CD4-positive, alpha-beta memory T cell (primary cell): ENCODE measurements at regions of chr11 and their contacts with region 1.

Region 1: DNA sequence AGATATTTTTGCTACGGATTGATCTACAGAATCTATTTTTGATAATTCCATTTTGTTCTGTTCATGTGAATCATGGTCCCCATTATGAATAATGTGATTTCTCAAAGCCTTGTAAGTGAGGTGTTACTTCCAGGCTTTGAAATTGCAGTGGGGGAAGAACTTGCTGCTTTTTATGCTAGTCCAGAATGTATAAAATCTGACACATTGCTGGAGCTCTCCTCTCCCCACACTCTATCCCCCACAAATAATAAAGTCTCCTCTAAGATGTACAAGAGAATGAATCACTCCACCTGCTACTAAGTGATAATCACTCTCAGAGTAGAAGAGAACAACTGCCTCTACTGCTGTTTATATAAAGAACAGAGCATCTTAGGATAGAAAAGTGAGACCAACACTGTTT is 5.9 kb upstream of the RAB6A start:
- DNase-seq: no peak
- H3K4me3 ChIP-seq: no peak overlapping the region
- H3K4me3 Mint-ChIP-seq: no peak overlapping the region
- H3K27ac ChIP-seq: no peak overlapping the region
- H3K27ac Mint-ChIP-seq: no peak overlapping the region
- H3K4me1 ChIP-seq: no peaks in the 10 kb centered on the region
- H3K4me1 Mint-ChIP-seq: no peaks in the 10 kb centered on the region
- H3K27me3 ChIP-seq: no peaks in the 10 kb centered on the region
- H3K27me3 Mint-ChIP-seq: peaks cover 4 to 7% of the 10 kb centered on the region in 2 donors

Region 2: GRCh38 chr11:73779084-73779902 is 12.5 kb after region 1 on chr11:
- CTCF ChIA-PET with region 1: interaction called, 25 read pairs
- POLR2A ChIA-PET with region 1: interaction called, 278 read pairs
- intact Hi-C with region 1: loop called (anchors 1 kb)
- DNase-seq: peak; percentile 97 to 98 (median 98)
- H3K4me3 ChIP-seq: peak overlapping the region; percentile 58 to 62
- H3K4me3 Mint-ChIP-seq: peak overlapping the region; percentile 91 to 97 (median 94)
- H3K27ac ChIP-seq: peak overlapping the region; percentile 90
- H3K27ac Mint-ChIP-seq: peak overlapping the region; percentile 96 to 100 (median 100)
- H3K4me1 ChIP-seq: peaks cover 5% of the 10 kb centered on the region
- H3K4me1 Mint-ChIP-seq: peaks cover 6 to 13% (median 7%) of the 10 kb centered on the region in 4 donors
- H3K27me3 ChIP-seq: no peaks in the 10 kb centered on the region
- H3K27me3 Mint-ChIP-seq: peaks cover 0 to 4% of the 10 kb centered on the region in 2 donors